GM10248 (cell line): ENCODE measurements at regions of chr1 and their contacts with region 1.

Region 1: DNA sequence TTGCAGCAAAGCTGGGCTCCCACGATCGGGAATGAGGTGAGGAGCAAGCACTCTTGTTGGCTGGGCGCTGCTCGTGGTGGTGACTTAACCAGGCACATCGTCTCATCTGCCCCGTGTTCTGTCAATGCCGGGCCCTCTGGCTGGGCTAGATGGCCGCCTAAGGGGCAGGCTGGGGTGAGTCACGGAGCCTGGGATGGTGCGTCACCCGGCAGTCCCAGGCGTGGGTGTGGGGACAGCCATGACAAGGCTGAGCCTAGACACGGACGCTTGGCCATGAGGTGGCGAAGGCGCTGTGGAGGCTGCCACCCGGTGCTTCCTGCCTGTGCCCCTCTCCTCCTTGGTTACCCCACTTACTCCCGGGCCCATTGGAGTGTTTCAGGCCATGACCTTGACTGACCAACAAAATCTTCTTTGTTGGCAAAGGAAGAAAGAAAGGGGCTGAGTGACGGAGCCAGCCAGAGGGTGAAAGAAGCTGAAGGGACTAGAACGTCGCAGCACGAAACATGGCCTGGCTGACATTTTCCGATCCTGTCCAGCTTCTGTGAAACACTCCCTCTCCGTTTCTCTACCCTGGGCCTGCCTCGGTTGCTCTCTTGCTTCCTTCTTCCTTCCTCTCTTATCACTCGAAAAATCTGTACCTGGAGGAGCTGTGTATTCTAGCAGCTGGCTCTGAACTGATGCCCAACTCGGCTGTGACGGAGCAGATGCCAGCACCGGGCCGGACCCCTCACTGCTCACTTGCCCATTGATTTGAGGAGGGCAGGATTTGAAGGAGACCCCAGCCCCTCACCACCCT is 596 bp downstream of the CD247 start:
- DNase-seq: no peak
- CTCF ChIP-seq: no peak

Region 2: GRCh38 chr1:167439301-167439988 is 78.3 kb before region 1 on chr1:
- CTCF ChIA-PET with region 1: no interaction called
- POLR2A ChIA-PET with region 1: no interaction called
- DNase-seq: no peak
- CTCF ChIP-seq: peak; percentile 27

Region 3: DNA sequence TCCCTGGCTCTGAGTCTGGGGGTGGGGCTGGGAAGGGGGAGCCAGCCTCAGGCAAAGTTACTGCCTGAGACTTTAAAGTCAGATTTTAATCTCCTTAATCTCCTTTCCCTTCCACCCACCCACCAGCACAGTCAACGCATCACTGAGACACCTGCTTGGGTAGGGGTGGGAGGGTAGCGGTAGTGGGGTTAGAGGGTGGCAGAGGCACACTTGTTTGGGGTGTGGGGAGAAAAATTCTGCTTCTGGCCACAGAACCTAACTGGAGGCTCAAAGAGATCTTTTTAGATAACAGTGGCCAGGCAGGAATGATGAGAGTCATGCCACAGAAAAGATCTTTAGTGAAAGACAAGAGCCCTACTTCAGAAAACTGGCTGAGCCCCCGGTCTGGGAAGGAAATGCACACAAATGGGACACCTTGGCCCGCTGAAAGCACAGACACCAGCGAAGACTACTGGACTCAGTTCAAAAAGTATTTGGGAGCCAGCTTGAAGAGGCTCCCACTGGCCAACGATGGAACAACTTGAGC is 43.5 kb before region 1 on chr1:
- CTCF ChIA-PET with region 1: no interaction called
- POLR2A ChIA-PET with region 1: no interaction called
- DNase-seq: no peak
- CTCF ChIP-seq: no peak

Region 4: GRCh38 chr1:167486090-167486824 is 31.5 kb before region 1 on chr1:
- CTCF ChIA-PET with region 1: no interaction called
- POLR2A ChIA-PET with region 1: no interaction called
- DNase-seq: no peak
- CTCF ChIP-seq: no peak

Region 5: GRCh38 chr1:167499664-167500101 is 18.1 kb before region 1 on chr1:
- CTCF ChIA-PET with region 1: interaction called, 10 read pairs
- POLR2A ChIA-PET with region 1: no interaction called
- DNase-seq: peak; percentile 79
- CTCF ChIP-seq: no peak

Region 6: DNA sequence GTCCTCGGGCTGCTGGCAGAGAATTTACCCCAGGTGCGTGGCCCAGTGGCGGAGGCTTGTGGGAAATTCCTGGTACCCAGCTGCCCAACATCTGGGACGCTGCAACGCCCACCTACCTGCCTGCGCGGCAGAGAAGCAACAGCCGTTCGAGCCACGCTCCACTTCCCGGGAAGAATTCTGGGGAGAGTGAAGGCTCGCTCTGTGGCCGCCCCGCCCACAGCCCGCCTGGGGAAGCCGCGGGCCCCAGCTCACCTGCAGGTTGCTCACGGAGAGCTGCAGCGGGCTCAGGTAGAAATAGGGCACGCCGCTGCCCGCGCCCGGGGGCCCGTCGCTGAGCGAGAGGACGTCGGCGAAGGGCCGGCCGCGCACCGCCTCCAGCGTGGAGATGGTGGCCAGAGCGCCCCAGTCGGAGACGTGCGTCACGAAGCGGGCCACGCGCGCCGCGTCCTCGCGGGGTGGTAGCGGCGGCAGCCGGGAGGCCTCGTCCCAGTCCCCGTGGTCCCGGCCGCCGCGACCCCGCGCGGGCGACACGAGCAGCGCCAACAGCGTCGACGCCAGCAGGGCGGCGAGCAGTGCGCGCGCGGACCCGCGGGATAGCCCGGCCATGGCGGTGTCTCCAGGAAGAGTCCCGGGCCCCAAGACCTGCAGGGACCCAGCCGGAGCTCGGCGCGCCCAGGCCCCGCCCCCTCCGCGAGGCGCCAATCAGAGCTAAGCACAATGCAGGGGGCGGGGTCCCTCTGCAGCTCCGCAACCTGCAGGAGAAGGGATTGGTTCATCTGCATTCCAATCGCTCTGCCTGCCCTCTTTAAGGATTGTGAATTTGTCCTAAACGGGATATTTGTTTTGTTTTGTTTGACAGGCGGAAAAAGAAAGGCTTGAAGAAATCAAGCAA is 35.6 kb after region 1 on chr1 and contains the start of gene CREG1:
- CTCF ChIA-PET with region 1: no interaction called
- POLR2A ChIA-PET with region 1: no interaction called
- DNase-seq: peak; percentile 95
- CTCF ChIP-seq: no peak